ENCODE measurements at regions of chr12 and their contacts with region 1.

Region 1: DNA sequence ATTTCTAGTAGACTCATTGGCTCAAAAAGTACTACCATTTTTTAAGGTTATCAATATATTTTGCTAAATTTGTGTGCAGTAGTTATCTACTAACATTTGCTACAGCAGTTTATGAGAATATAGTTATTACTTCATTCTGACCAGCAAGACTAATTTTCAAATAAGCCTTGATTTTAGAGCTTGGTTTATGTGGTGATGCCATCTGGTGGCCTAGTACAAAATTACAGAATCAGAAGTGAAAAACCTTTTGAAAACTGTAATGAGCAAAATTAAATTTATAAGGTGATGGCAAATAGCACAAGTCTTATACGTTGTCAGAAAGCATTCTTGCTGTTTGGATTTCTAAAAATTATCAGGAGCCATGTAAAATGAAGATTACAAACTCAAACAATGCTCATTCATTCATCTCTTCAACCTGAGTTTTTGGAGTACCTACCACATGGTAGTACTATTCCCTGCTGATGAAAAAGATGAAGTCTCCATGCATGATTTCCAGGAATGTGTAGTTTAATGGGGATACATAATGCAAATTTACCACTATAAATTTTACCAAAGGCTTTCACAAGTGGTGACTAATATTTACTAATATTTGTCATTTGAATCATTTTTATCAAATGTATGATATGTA is 51.0 kb downstream of the MAGOHB start:
- H3K4me3 ChIP-seq: no peak overlapping the region
- H3K27ac ChIP-seq: no peak overlapping the region
- H3K4me1 ChIP-seq: no peaks in the 10 kb centered on the region
- CTCF ChIP-seq: no peak

Region 2: GRCh38 chr12:10140001-10140400 is 422.4 kb before region 1 on chr12:
- CTCF ChIA-PET with region 1: no interaction called
- POLR2A ChIA-PET with region 1: no interaction called
- H3K4me3 ChIP-seq: no peak overlapping the region
- H3K27ac ChIP-seq: no peak overlapping the region
- H3K4me1 ChIP-seq: no peaks in the 10 kb centered on the region
- CTCF ChIP-seq: no peak; the same call in 1 of the 2 replicates

Region 3: DNA sequence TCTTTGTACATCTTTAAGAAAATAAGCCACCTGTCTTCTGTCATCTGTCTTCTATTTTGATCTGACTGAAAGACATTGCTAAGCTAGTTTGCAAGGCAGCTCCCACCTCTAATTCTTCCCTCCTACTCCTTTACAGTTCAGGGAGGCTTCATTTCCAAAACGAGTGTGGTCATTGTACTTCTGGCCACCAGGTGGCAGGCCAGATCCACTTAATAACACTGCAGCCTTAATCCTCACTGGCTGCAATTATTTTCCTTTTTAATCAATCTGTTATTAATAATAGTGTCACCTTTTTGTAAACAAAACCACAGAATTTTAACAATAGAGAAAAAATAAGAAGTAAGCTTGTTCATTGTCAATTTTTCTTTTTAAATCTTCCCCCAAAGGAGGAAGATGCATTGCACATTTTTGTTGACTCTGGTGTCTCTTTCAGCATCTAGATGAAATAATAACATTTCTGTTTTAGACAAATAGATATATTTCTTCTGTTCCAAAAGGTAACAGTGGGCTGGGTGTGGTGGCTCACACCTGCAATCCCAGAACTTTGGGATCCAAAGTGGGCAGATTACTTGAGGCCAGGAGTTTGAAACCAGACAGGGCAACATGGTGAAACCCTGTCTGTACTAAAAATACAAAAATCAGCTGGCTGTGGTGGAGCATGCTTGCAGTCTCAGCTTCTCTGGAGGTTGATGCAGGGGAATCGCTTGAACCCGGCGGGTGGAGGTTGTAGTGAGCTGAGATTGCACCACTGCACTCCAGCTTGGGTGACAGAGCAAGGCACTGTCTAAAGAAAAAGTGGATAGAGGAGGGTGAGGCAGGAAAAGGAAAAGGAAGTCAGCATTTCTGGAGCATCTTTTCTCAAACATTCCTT is 326.4 kb before region 1 on chr12:
- CTCF ChIA-PET with region 1: interaction called, 29 read pairs
- POLR2A ChIA-PET with region 1: no interaction called
- H3K4me3 ChIP-seq: no peak overlapping the region
- H3K27ac ChIP-seq: no peak overlapping the region
- H3K4me1 ChIP-seq: no peaks in the 10 kb centered on the region
- CTCF ChIP-seq: peak; percentile 30; the same call in 1 of the 2 replicates

Region 4: GRCh38 chr12:10331642-10332239 is 230.7 kb before region 1 on chr12:
- CTCF ChIA-PET with region 1: interaction called, 13 read pairs
- POLR2A ChIA-PET with region 1: no interaction called
- H3K4me3 ChIP-seq: no peak overlapping the region
- H3K27ac ChIP-seq: no peak overlapping the region
- H3K4me1 ChIP-seq: no peaks in the 10 kb centered on the region
- CTCF ChIP-seq: peak; percentile 95

Measured in HEK293 (cell line).